Natural killer cell (primary cell): ENCODE measurements at regions of chr16 and their contacts with region 1.

Region 1: GRCh38 chr16:30747799-30748634 is at the start of gene PHKG2:
- DNase-seq: peak; percentile 94 to 98
- ATAC-seq: peak; percentile 94 to 98 (median 95)
- H3K4me3 ChIP-seq: peak within 1 kb of the TSS; percentile 60
- H3K4me3 Mint-ChIP-seq: peak within 1 kb of the TSS; percentile 95
- H3K27ac ChIP-seq: peak within 1 kb of the TSS; percentile 79
- H3K27ac Mint-ChIP-seq: peak within 1 kb of the TSS; percentile 90 to 93
- H3K4me1 ChIP-seq: peaks cover 19% of the 10 kb centered on the region
- H3K4me1 Mint-ChIP-seq: peaks cover 34 to 45% of the 10 kb centered on the region in 2 donors
- H3K27me3 ChIP-seq: no peaks in the 10 kb centered on the region
- H3K27me3 Mint-ChIP-seq: no peaks in the 10 kb centered on the region
- CTCF ChIP-seq: no peak
- total RNA-seq, gene PHKG2: 50.5 to 86.1 (median 64.8) TPM

Region 2: DNA sequence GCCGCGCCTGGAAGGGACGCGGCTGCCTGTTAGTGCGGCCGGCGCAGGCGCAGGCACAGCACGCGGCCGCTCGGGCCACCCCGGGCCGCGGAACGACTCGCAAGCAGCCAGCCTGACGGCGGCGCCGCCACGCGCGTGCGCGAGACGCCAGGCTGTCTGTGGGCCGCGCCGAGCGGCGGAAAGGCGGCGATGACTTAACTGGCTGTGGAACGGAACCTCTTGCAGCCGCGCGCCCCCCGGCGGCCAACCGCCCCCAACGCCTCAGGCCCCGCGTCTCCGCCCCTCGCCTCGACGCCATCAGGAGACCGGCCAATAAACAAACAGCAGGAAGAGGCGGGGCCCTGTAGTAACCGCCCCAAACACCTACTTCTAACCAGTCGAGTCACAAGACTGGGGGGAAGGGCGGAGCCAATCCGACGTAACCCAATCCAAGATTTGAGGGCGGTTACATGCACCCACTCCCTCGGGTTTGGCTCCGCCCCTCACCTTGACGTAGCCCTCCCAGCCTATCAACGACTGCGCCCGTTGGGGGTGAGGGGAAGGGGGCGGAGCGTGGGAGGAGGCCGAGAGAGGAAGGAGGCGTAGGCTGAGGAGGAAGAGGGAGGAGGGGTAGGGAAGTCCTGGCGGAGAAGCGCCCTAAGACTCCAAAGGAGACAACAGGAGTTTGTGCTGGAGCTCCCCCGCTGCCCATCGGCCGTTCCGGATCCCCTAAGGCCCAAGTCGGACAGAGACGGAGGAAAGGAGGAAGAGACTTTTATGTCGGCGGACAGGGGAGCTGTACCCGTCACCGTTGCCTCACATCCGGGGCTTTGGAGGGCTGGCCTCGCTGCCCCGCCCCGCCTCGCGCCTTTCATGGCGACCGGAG is 89.9 kb before region 1 on chr16 and contains the start of gene FBRS:
- intact Hi-C with region 1: loop called (anchors 1 kb)
- DNase-seq: peak; percentile 99 to 100
- ATAC-seq: peak; percentile 72 to 86 (median 74)
- H3K4me3 ChIP-seq: peak within 1 kb of the TSS; percentile 97
- H3K4me3 Mint-ChIP-seq: peak within 1 kb of the TSS; percentile 98
- H3K27ac ChIP-seq: peak within 1 kb of the TSS; percentile 99
- H3K27ac Mint-ChIP-seq: peak within 1 kb of the TSS; percentile 98 to 99
- H3K4me1 ChIP-seq: peaks cover 39% of the 10 kb centered on the region
- H3K4me1 Mint-ChIP-seq: peaks cover 38 to 52% of the 10 kb centered on the region in 2 donors
- H3K27me3 ChIP-seq: no peaks in the 10 kb centered on the region
- H3K27me3 Mint-ChIP-seq: no peaks in the 10 kb centered on the region
- CTCF ChIP-seq: peak; percentile 77
- total RNA-seq, gene FBRS: 158 to 182 (median 172) TPM

Region 3: DNA sequence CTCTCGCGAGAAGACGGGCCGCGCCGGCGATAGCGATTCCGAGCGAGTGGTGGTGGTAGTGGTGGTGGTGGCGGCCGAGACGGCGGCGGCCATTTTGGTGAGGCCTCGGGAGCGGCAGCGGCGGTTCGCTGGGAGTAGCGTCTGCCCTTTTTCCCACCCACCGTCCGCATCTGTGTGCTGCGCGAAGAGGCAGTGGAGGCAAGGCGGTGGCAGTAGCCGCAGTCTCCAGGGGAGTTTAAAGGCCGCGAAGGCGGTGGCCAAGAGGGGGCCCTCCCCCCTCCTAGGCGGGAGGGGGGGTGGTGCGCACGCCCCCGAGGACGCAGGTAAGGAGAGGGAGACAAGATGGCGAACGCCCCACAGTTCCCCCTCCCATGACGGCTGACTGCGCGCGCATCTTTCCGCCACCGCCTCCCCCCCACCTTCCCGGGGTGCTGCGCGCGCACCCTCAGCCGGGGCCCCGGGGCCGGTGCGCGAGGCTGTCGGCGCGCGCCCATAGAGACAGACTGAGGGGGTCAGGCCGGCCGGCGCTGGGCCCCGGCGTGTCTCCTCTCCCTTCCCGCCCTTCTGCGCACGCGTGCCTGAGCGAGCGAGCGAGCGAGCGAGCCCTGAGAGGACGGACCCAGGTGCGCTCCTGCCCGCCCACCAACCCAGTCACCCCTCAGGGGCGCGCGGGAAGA is 49.7 kb before region 1 on chr16:
- intact Hi-C with region 1: loop called (anchors 5 kb)
- DNase-seq: peak; percentile 97 to 99
- ATAC-seq: peak; percentile 72 to 88 (median 75)
- H3K4me3 ChIP-seq: peak overlapping the region; percentile 89
- H3K4me3 Mint-ChIP-seq: peak overlapping the region; percentile 94
- H3K27ac ChIP-seq: peak overlapping the region; percentile 99
- H3K27ac Mint-ChIP-seq: peak overlapping the region; percentile 98 to 100
- H3K4me1 ChIP-seq: peaks cover 26% of the 10 kb centered on the region
- H3K4me1 Mint-ChIP-seq: peaks cover 36 to 46% of the 10 kb centered on the region in 2 donors
- H3K27me3 ChIP-seq: no peaks in the 10 kb centered on the region
- H3K27me3 Mint-ChIP-seq: no peaks in the 10 kb centered on the region
- CTCF ChIP-seq: no peak

Region 4: GRCh38 chr16:30761928-30762810 is 14.2 kb after region 1 on chr16 and contains the starts of genes CFAP119 and RNF40:
- intact Hi-C with region 1: loop called (anchors 2 kb)
- DNase-seq: peak; percentile 84 to 95
- ATAC-seq: peak; percentile 94 to 97 (median 95)
- H3K4me3 ChIP-seq: peak within 1 kb of the TSS; percentile 80
- H3K4me3 Mint-ChIP-seq: peak within 1 kb of the TSS; percentile 95
- H3K27ac ChIP-seq: peak within 1 kb of the TSS; percentile 77
- H3K27ac Mint-ChIP-seq: peak within 1 kb of the TSS; percentile 92
- H3K4me1 ChIP-seq: peaks cover 57% of the 10 kb centered on the region
- H3K4me1 Mint-ChIP-seq: peaks cover 35 to 55% of the 10 kb centered on the region in 2 donors
- H3K27me3 ChIP-seq: no peaks in the 10 kb centered on the region
- H3K27me3 Mint-ChIP-seq: no peaks in the 10 kb centered on the region
- CTCF ChIP-seq: no peak
- total RNA-seq, gene CFAP119: 3.4 to 5.1 (median 4.9) TPM
- total RNA-seq, gene RNF40: 153 to 167 (median 161) TPM

Region 5: DNA sequence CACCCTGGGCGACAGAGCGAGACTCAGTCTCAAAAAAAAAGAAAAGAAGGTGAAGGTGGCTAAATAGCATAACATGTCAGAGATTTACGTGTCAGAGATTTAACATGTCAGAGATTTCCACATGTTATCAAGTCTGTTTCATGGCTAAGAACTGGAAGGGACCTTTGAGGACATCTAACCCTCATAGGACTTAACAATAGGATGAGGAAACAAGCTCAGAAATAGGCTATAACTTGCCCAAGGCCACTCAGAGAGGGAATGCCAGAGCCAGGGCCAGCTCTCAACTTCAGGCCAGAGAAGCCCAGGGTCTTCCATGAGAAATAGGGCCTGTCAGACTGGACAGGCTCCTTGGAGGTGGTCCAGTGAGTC is 65.8 kb after region 1 on chr16:
- intact Hi-C with region 1: loop called (anchors 1 kb)
- DNase-seq: no peak
- ATAC-seq: peak in 2 of 3 donors; percentile 1 to 5
- H3K4me3 ChIP-seq: peak overlapping the region; percentile 48
- H3K4me3 Mint-ChIP-seq: peak overlapping the region; percentile 89
- H3K27ac ChIP-seq: peak overlapping the region; percentile 83
- H3K27ac Mint-ChIP-seq: peak overlapping the region; percentile 85 to 88
- H3K4me1 ChIP-seq: peaks cover 14% of the 10 kb centered on the region
- H3K4me1 Mint-ChIP-seq: peaks cover 15 to 16% of the 10 kb centered on the region in 2 donors
- H3K27me3 ChIP-seq: no peaks in the 10 kb centered on the region
- H3K27me3 Mint-ChIP-seq: peaks cover 0 to 3% of the 10 kb centered on the region in 2 donors
- CTCF ChIP-seq: no peak